Tibial artery (tissue), 4 donors: ENCODE measurements at regions of chr3 and their contacts with region 1.

Region 1: GRCh38 chr3:51670823-51671733 is at the start of gene TEX264:
- DNase-seq: peak; percentile 87 to 94
- H3K4me3 ChIP-seq: peak within 1 kb of the TSS; percentile 89 to 98
- H3K27ac ChIP-seq: peak within 1 kb of the TSS; percentile 88 to 96
- H3K4me1 ChIP-seq: peaks cover 0 to 55% (median 21%) of the 10 kb centered on the region in 4 donors
- H3K27me3 ChIP-seq: no peaks in the 10 kb centered on the region
- CTCF ChIP-seq: no peak

Region 2: DNA sequence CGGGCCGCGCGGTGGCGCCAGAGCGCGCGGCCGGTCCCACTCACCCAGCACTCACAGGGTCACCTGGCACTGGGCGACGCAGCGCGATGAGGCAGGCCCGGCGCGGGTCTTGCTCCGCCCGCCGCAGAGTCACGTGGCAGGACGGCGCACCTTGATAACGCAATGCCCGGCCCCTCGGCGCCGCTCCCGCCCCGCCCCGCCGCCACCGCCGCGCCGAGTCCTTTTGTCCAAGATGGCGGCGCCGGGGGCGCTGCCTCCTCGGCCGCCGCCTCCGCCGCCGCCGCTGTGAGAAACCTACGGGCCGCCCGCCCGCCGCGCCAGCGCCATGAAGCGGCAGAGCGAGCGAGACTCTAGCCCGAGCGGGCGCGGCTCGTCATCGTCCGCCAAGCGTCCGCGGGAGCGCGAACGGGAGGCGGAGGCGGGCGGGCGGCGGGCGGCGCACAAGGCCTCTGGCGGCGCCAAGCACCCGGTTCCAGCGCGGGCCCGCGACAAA is 280.0 kb before region 1 on chr3 and contains the start of gene RBM15B:
- intact Hi-C with region 1: loop called (anchors 10 kb)
- DNase-seq: peak; percentile 97 to 99
- H3K4me3 ChIP-seq: peak within 1 kb of the TSS; percentile 70 to 76
- H3K27ac ChIP-seq: peak within 1 kb of the TSS; percentile 83 to 84
- H3K4me1 ChIP-seq: peaks cover 0 to 90% (median 58%) of the 10 kb centered on the region in 4 donors
- H3K27me3 ChIP-seq: no peaks in the 10 kb centered on the region
- CTCF ChIP-seq: peak; percentile 86 to 90

Region 3: GRCh38 chr3:51501833-51502561 is 169.1 kb before region 1 on chr3:
- intact Hi-C with region 1: loop called (anchors 1 kb)
- DNase-seq: peak; percentile 74 to 85
- H3K4me3 ChIP-seq: no peak overlapping the region
- H3K27ac ChIP-seq: peak overlapping the region in 1 of 2 donors; percentile 11
- H3K4me1 ChIP-seq: peaks cover 0 to 10% (median 5%) of the 10 kb centered on the region in 4 donors
- H3K27me3 ChIP-seq: peaks cover 0 to 4% of the 10 kb centered on the region in 2 donors
- CTCF ChIP-seq: peak; percentile 93 to 94

Region 4: DNA sequence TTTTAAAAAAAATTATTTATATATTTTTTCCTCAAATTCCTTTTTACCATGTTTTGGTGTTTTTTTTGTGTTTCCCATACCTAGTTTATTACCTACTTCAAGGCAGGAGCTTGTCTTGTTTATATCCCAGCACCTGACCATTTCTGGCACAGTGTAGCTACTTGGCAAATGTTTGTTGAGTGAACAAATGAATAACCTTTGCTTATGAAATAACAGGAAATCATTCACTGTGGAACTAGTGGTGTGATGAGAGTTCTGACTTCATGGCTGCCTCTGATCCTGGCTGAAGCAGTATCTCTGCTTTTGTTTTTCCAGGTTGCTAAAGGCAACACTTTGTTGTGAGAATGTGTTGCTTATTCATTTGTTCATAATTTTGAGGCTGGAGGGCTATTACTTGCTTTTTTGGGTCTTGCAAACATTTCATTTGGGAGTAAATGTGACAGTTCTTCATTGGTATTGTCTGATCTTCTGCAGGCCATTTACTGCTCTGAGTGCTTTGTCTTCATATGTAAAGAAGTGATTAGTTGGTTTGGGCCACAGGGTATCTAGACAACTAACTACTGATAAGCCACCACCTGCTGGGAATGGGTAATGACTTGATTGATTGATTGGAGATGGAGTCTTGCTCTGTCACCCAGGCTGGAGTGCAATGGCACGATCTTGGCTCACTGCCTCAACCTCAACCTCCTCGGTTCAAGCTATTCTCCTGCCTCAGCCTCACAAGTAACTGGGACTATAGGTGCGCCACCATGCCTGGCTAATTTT is 126.9 kb before region 1 on chr3:
- intact Hi-C with region 1: loop called (anchors 10 kb)
- DNase-seq: no peak
- H3K4me3 ChIP-seq: no peak overlapping the region
- H3K27ac ChIP-seq: no peak overlapping the region
- H3K4me1 ChIP-seq: peaks cover 0 to 14% (median 7%) of the 10 kb centered on the region in 4 donors
- H3K27me3 ChIP-seq: no peaks in the 10 kb centered on the region
- CTCF ChIP-seq: no peak